Vagina (tissue), 2 donors: ENCODE measurements at regions of chr7 and their contacts with region 1.

Region 1: DNA sequence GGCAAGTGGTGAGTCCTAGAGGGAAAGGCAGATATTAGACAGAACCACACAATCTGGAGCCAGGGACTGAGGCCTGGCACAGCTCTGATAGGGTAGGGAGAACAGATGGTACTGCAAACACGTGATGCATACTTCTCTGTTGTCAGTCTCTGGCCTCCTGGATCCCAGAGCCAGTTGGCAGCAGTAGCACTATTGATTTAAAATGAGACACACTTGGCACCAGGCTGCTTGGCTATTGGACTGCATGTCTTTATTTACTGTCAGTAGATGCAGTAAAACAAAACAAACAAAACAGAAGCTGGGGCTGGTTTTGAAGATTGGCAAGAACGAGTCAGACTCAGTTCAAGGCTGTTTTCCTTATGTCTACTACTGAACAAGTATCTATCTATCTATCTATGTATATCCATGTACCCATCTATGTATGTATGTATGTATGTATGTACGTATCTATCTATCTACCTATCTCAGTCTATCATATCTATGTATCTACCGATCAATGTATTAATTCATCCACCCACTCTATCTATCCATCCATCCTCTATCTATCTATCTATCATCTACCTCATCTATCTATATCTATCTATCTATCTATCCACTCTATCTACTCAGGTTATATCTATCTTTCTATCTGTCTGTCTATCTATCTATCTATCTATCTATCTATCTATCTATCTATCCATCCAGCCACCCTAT is 23.4 kb upstream of the MGAM2 start:
- DNase-seq: no peak
- H3K4me3 ChIP-seq: no peak overlapping the region
- H3K27ac ChIP-seq: no peak overlapping the region
- H3K4me1 ChIP-seq: no peaks in the 10 kb centered on the region
- H3K27me3 ChIP-seq: no peaks in the 10 kb centered on the region
- CTCF ChIP-seq: no peak
- POLR2A ChIP-seq: no peak

Region 2: GRCh38 chr7:141754939-141755338 is 333.2 kb before region 1 on chr7:
- intact Hi-C with region 1: no loop called
- DNase-seq: no peak
- H3K4me3 ChIP-seq: no peak overlapping the region
- H3K27ac ChIP-seq: no peak overlapping the region
- H3K4me1 ChIP-seq: no peaks in the 10 kb centered on the region
- H3K27me3 ChIP-seq: no peaks in the 10 kb centered on the region
- CTCF ChIP-seq: no peak
- POLR2A ChIP-seq: no peak

Region 3: DNA sequence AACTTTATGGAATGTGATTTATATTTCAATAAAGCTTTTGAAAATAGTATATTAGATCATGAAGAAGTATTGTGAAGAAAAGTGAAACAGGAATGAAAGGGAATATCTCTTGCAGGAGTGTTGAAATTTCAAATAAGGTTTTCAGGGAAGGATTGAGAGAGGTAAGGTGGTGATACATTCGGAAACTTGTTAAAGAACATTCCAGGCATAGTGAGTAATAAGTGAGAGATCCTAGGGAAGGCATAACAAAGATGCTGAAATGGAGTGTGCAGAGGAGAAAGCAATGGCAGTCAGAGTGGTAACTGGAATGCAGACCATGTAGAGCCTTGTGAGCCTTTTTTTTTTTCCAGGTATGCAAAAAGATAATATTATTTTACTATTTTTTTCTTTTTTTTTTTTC is 167.9 kb before region 1 on chr7:
- intact Hi-C with region 1: no loop called
- DNase-seq: no peak
- H3K4me3 ChIP-seq: no peak overlapping the region
- H3K27ac ChIP-seq: no peak overlapping the region
- H3K4me1 ChIP-seq: no peaks in the 10 kb centered on the region
- H3K27me3 ChIP-seq: no peaks in the 10 kb centered on the region
- CTCF ChIP-seq: no peak
- POLR2A ChIP-seq: no peak

Region 4: DNA sequence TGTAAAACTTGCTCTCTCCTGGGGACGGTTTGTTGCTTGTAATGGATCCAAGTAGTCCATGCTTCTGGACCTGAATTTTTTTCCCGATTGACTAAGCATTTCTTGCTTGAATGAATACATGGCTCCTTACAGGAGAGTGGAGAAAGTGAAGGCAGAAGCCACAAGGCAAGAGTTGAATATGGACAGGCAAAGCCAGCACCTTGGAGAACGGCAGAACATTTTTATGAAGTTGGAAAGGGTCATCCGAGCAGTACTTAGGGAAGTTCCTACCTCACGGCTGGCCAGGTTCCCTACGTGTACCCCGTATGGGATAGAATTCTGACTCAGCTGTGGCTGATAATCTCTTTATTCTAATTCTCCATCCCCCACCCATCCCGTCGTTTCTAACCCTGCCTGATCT is 27.2 kb before region 1 on chr7:
- intact Hi-C with region 1: loop called (anchors 1 kb)
- DNase-seq: no peak
- H3K4me3 ChIP-seq: no peak overlapping the region
- H3K27ac ChIP-seq: no peak overlapping the region
- H3K4me1 ChIP-seq: no peaks in the 10 kb centered on the region
- H3K27me3 ChIP-seq: no peaks in the 10 kb centered on the region
- CTCF ChIP-seq: no peak
- POLR2A ChIP-seq: no peak